ENCODE measurements at regions of chr22 and their contacts with region 1.

Region 1: DNA sequence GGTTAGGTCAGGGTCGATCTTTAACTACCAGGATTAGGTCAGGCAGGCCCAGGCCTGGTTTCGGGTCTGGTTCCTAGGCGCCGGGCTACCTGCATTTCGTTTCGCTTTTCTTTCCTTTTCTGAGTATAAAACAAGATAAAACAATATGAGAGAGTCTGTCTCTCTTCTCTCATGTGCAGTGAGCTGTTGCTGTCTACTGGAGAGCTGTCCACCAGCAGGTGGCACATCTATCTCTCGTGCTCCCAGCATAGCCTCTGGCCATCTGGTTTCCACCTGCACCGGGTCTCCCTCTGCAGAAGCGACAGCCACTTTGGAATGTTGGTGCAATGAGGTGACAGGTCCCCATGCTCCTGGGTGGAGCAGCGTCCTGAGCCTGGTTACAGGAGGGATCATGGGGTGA is 27.6 kb downstream of the RIBC2 start:
- DNase-seq: no peak
- H3K4me3 ChIP-seq: no peak overlapping the region
- H3K27me3 ChIP-seq: no peaks in the 10 kb centered on the region
- CTCF ChIP-seq: peak; percentile 79

Region 2: GRCh38 chr22:45271667-45272201 is 169.4 kb before region 1 on chr22:
- CTCF ChIA-PET with region 1: interaction called, 10 read pairs
- POLR2A ChIA-PET with region 1: no interaction called
- DNase-seq: no peak
- H3K4me3 ChIP-seq: no peak overlapping the region
- H3K27me3 ChIP-seq: peaks cover 6% of the 10 kb centered on the region
- CTCF ChIP-seq: no peak

Region 3: GRCh38 chr22:45502215-45503049 is 61.3 kb after region 1 on chr22 and contains the start of gene FBLN1:
- CTCF ChIA-PET with region 1: interaction called, 14 read pairs
- POLR2A ChIA-PET with region 1: no interaction called
- DNase-seq: no peak
- H3K4me3 ChIP-seq: peak within 1 kb of the TSS; percentile 99
- H3K27me3 ChIP-seq: no peaks in the 10 kb centered on the region
- CTCF ChIP-seq: peak; percentile 22; the same call in 1 of the 2 replicates
- polyA plus RNA-seq, gene FBLN1: 681 and 1,033 TPM in 2 replicates

Region 4: GRCh38 chr22:45757068-45757467 is 315.9 kb after region 1 on chr22:
- CTCF ChIA-PET with region 1: no interaction called
- POLR2A ChIA-PET with region 1: interaction called, 16 read pairs
- DNase-seq: peak; percentile 53
- H3K4me3 ChIP-seq: no peak overlapping the region
- H3K27me3 ChIP-seq: no peaks in the 10 kb centered on the region
- CTCF ChIP-seq: peak; percentile 52